CD4-positive, alpha-beta memory T cell (primary cell): ENCODE measurements at regions of chr3 and their contacts with region 1.

Region 1: DNA sequence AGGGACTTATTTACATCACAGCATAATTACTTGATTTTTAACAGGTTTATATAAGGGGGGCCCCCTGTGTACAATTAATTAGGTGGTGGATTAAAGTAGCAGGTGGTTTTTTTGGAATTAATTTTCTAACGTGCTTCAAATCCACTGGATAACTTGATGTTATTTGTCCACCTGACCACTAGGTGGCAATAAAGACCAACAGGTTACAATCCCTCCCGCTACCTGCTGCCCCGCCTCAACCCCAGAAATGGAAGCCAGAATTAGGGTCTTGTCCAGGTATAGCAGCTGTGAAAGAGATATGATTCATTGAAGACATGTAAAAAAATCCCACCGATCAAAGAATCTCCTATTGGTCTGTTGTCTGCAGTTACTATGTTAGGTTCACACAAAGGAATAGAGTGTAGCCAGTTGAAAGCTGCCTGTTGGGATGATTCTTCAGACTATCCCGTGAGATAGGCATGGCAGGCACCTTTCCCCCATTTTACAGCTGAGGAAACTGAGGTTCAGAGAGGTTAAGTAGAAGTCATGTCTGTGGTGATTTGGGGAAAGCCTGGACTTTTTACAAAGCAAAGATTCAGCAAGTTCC is 44.0 kb downstream of the MFSD1 start:
- DNase-seq: peak; percentile 45 to 56 (median 46)
- H3K4me3 ChIP-seq: no peak overlapping the region
- H3K4me3 Mint-ChIP-seq: peak overlapping the region in 1 of 8 donors; percentile 39
- H3K27ac ChIP-seq: no peak overlapping the region
- H3K27ac Mint-ChIP-seq: no peak overlapping the region
- H3K4me1 ChIP-seq: peaks cover 4% of the 10 kb centered on the region
- H3K4me1 Mint-ChIP-seq: peaks cover 0 to 5% (median 3%) of the 10 kb centered on the region in 4 donors
- H3K27me3 ChIP-seq: no peaks in the 10 kb centered on the region
- H3K27me3 Mint-ChIP-seq: no peaks in the 10 kb centered on the region

Region 2: DNA sequence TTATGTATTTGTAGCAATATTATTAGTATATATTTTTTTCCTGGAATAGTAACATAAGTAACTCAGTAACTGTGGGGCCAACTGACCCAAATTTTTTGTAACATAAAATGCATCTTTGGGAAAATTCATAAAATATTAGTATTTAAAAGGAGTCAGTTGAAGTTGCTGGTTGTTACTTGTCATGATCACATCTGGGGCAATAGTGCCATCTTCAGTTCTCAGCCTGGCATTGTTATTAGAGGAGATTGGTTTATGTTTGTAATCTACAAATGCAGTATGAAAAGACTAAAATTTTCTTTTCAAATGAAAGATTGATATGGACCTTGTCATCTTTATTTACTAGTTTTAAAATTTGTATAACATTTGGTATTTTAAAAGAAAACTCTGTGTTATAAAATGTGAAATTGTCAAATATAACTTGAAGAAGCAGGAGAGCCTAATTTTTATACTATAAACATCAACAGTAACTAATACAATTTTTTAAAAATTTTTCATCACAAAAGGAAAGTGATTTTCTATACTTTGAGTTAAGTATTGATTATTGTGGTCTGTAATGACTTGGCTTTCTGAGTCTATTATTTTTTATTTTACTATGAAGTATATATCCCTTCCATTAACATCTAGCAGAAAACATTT is 313.6 kb before region 1 on chr3:
- CTCF ChIA-PET with region 1: no interaction called
- POLR2A ChIA-PET with region 1: no interaction called
- intact Hi-C with region 1: no loop called
- DNase-seq: peak in 3 of 5 donors; percentile 4 to 12 (median 6)
- H3K4me3 ChIP-seq: no peak overlapping the region
- H3K4me3 Mint-ChIP-seq: no peak overlapping the region
- H3K27ac ChIP-seq: no peak overlapping the region
- H3K27ac Mint-ChIP-seq: no peak overlapping the region
- H3K4me1 ChIP-seq: no peaks in the 10 kb centered on the region
- H3K4me1 Mint-ChIP-seq: no peaks in the 10 kb centered on the region
- H3K27me3 ChIP-seq: no peaks in the 10 kb centered on the region
- H3K27me3 Mint-ChIP-seq: no peaks in the 10 kb centered on the region

Region 3: GRCh38 chr3:158918008-158918407 is 72.2 kb after region 1 on chr3:
- CTCF ChIA-PET with region 1: no interaction called
- POLR2A ChIA-PET with region 1: no interaction called
- intact Hi-C with region 1: no loop called
- DNase-seq: no peak
- H3K4me3 ChIP-seq: no peak overlapping the region
- H3K4me3 Mint-ChIP-seq: no peak overlapping the region
- H3K27ac ChIP-seq: no peak overlapping the region
- H3K27ac Mint-ChIP-seq: no peak overlapping the region
- H3K4me1 ChIP-seq: no peaks in the 10 kb centered on the region
- H3K4me1 Mint-ChIP-seq: no peaks in the 10 kb centered on the region
- H3K27me3 ChIP-seq: no peaks in the 10 kb centered on the region
- H3K27me3 Mint-ChIP-seq: peaks cover 3 to 5% of the 10 kb centered on the region in 2 donors

Region 4: GRCh38 chr3:159001711-159002110 is 155.9 kb after region 1 on chr3:
- CTCF ChIA-PET with region 1: no interaction called
- POLR2A ChIA-PET with region 1: no interaction called
- intact Hi-C with region 1: no loop called
- DNase-seq: no peak
- H3K4me3 ChIP-seq: no peak overlapping the region
- H3K4me3 Mint-ChIP-seq: no peak overlapping the region
- H3K27ac ChIP-seq: no peak overlapping the region
- H3K27ac Mint-ChIP-seq: no peak overlapping the region
- H3K4me1 ChIP-seq: no peaks in the 10 kb centered on the region
- H3K4me1 Mint-ChIP-seq: no peaks in the 10 kb centered on the region
- H3K27me3 ChIP-seq: no peaks in the 10 kb centered on the region
- H3K27me3 Mint-ChIP-seq: peaks cover 0 to 1% of the 10 kb centered on the region in 2 donors

Region 5: GRCh38 chr3:159260049-159260662 is 414.3 kb after region 1 on chr3:
- CTCF ChIA-PET with region 1: interaction called, 23 read pairs
- POLR2A ChIA-PET with region 1: no interaction called
- intact Hi-C with region 1: no loop called
- DNase-seq: peak in 4 of 5 donors; percentile 7 to 25 (median 17)
- H3K4me3 ChIP-seq: no peak overlapping the region
- H3K4me3 Mint-ChIP-seq: no peak overlapping the region
- H3K27ac ChIP-seq: no peak overlapping the region
- H3K27ac Mint-ChIP-seq: no peak overlapping the region
- H3K4me1 ChIP-seq: no peaks in the 10 kb centered on the region
- H3K4me1 Mint-ChIP-seq: no peaks in the 10 kb centered on the region
- H3K27me3 ChIP-seq: no peaks in the 10 kb centered on the region
- H3K27me3 Mint-ChIP-seq: peaks cover 1 to 7% of the 10 kb centered on the region in 2 donors

Region 6: GRCh38 chr3:159804726-159805410 is 959.0 kb after region 1 on chr3:
- CTCF ChIA-PET with region 1: no interaction called
- POLR2A ChIA-PET with region 1: no interaction called
- intact Hi-C with region 1: loop called (anchors 5 kb)
- DNase-seq: peak in 1 of 5 donors; percentile 2
- H3K4me3 ChIP-seq: no peak overlapping the region
- H3K4me3 Mint-ChIP-seq: no peak overlapping the region
- H3K27ac ChIP-seq: no peak overlapping the region
- H3K27ac Mint-ChIP-seq: no peak overlapping the region
- H3K4me1 ChIP-seq: no peaks in the 10 kb centered on the region
- H3K4me1 Mint-ChIP-seq: no peaks in the 10 kb centered on the region
- H3K27me3 ChIP-seq: no peaks in the 10 kb centered on the region
- H3K27me3 Mint-ChIP-seq: peaks cover 0 to 7% of the 10 kb centered on the region in 2 donors

Region 7: DNA sequence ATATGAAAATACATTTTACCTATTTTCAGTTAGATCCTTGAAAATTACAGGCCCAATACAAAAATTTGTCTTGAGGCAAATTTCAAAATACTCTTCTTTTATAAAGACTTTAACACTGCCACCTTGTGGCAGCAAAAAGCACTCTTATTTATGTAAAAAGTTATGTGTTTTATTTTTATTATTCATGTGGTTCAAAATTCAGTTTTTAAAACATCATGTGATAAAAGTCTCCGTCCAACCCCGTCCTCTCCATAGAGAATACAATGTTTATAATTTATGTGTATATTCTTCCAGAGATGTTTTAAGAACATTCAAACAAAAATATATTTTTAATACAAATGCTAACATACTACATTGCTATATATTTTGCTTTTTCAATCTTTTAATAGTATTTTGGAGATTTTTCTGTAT is 1640.6 kb after region 1 on chr3:
- CTCF ChIA-PET with region 1: no interaction called
- POLR2A ChIA-PET with region 1: no interaction called
- intact Hi-C with region 1: loop called (anchors 2 kb)
- DNase-seq: peak in 4 of 5 donors; percentile 8 to 27 (median 20)
- H3K4me3 ChIP-seq: no peak overlapping the region
- H3K4me3 Mint-ChIP-seq: no peak overlapping the region
- H3K27ac ChIP-seq: no peak overlapping the region
- H3K27ac Mint-ChIP-seq: no peak overlapping the region
- H3K4me1 ChIP-seq: no peaks in the 10 kb centered on the region
- H3K4me1 Mint-ChIP-seq: peaks cover 0 to 7% (median 5%) of the 10 kb centered on the region in 4 donors
- H3K27me3 ChIP-seq: no peaks in the 10 kb centered on the region
- H3K27me3 Mint-ChIP-seq: peaks cover 2% of the 10 kb centered on the region in 2 donors